ENCODE measurements at regions of chr18 and their contacts with region 1.

Region 1: DNA sequence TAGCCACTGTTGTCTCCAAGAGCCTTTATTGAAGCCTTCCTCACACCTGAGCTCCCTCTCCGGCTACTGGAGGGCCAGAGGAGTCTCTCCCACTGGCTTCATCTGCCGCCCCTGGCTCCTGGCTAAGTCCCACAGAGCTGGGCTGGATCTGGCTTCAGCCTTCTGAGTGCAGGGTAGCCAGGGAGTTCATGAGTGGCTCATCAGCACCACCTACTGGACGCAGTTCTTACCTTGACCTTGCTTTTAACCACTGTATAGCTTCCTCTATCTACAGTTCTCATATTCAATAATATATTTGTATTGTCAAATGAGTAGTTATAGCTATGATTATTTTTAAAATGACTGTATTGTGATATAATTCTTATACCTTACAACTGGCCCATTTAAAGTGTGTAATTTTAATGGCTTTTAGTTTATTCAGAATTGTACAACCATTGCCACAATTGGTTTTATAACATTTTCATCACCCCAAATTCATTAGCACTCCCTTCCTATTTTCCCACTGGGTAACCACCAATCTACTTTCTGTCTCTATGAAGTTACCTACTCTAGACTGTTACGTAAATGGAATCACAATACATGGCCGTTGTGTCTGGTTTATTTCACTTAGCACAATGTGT is 17.7 kb downstream of the CNDP1 start:
- DNase-seq: peak; percentile 84 to 85
- H3K4me3 ChIP-seq: no peak overlapping the region
- H3K27ac ChIP-seq: no peak overlapping the region
- H3K4me1 ChIP-seq: no peaks in the 10 kb centered on the region
- H3K27me3 ChIP-seq: peaks cover 0 to 14% of the 10 kb centered on the region in 2 donors
- CTCF ChIP-seq: peak; percentile 69 to 73

Region 2: DNA sequence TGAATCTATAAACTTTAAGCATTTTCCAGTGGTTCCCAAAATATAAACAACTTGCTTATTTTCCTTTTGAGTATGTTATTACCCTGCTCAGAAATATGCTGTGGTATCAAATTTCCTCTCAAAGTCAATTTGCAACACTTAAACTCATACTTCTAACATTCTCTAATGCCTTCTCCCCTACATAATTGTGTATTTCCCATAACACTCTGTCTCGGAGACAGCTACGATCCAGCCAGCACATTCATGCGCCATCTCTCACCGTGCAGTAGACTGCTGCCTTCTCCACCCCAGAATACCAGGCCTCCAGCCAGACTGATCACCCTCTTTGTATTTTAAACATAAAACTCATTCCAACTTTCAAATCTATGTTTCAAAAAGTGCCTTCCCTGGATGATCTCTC is 362.0 kb before region 1 on chr18:
- intact Hi-C with region 1: loop called (anchors 5 kb)
- DNase-seq: no peak
- H3K4me3 ChIP-seq: no peak overlapping the region
- H3K27ac ChIP-seq: no peak overlapping the region
- H3K4me1 ChIP-seq: no peaks in the 10 kb centered on the region
- H3K27me3 ChIP-seq: peaks cover 0 to 31% of the 10 kb centered on the region in 2 donors
- CTCF ChIP-seq: no peak

Region 3: DNA sequence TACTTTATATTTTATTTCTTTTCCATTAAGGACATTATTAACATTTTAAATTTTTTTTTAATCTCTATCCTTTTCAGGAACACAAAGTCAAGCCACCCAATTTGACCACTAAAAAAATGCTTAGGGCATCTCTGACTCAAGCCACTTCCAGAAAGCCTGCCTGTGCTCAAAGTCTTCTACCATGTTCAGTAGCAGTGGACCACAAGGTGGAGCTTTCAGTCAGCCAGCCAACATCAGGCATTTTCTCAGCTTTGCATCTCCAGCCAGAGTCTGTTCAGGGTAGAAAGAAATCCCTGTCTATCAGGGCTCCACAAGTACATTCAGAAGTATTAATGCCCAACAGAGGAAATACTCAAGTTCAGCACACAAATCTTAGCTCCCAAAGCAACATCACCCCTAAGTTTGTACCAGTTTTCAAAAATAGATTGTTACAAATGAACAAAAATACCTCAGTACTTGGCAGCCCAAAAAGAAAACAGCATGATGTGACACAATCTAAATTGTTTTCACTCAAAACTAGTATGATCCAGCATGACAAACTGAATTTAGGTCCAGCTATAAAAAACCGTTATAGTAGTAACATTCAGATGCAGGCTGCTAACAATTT is 198.8 kb before region 1 on chr18:
- intact Hi-C with region 1: loop called (anchors 5 kb)
- DNase-seq: peak; percentile 60 to 80
- H3K4me3 ChIP-seq: no peak overlapping the region
- H3K27ac ChIP-seq: peak overlapping the region; percentile 27 to 29
- H3K4me1 ChIP-seq: peaks cover 0 to 16% (median 2%) of the 10 kb centered on the region in 4 donors
- H3K27me3 ChIP-seq: no peaks in the 10 kb centered on the region
- CTCF ChIP-seq: peak; percentile 68 to 78